ENCODE measurements at regions of chr1 and their contacts with region 1.

Region 1: GRCh38 chr1:113928941-113929749 is at the start of gene HIPK1:
- DNase-seq: peak; percentile 95
- H3K4me3 Mint-ChIP-seq: peak within 1 kb of the TSS; percentile 98
- H3K27ac Mint-ChIP-seq: peak within 1 kb of the TSS; percentile 99
- H3K4me1 Mint-ChIP-seq: peaks cover 46% of the 10 kb centered on the region
- H3K27me3 Mint-ChIP-seq: no peaks in the 10 kb centered on the region
- total RNA-seq, gene HIPK1: 55.3 to 55.7 TPM

Region 2: GRCh38 chr1:113742515-113742914 is 186.6 kb before region 1 on chr1:
- CTCF ChIA-PET with region 1: no interaction called
- POLR2A ChIA-PET with region 1: no interaction called
- intact Hi-C with region 1: no loop called
- DNase-seq: no peak
- H3K4me3 Mint-ChIP-seq: no peak overlapping the region
- H3K27ac Mint-ChIP-seq: peak overlapping the region; percentile 26
- H3K4me1 Mint-ChIP-seq: peaks cover 10% of the 10 kb centered on the region
- H3K27me3 Mint-ChIP-seq: no peaks in the 10 kb centered on the region

Region 3: DNA sequence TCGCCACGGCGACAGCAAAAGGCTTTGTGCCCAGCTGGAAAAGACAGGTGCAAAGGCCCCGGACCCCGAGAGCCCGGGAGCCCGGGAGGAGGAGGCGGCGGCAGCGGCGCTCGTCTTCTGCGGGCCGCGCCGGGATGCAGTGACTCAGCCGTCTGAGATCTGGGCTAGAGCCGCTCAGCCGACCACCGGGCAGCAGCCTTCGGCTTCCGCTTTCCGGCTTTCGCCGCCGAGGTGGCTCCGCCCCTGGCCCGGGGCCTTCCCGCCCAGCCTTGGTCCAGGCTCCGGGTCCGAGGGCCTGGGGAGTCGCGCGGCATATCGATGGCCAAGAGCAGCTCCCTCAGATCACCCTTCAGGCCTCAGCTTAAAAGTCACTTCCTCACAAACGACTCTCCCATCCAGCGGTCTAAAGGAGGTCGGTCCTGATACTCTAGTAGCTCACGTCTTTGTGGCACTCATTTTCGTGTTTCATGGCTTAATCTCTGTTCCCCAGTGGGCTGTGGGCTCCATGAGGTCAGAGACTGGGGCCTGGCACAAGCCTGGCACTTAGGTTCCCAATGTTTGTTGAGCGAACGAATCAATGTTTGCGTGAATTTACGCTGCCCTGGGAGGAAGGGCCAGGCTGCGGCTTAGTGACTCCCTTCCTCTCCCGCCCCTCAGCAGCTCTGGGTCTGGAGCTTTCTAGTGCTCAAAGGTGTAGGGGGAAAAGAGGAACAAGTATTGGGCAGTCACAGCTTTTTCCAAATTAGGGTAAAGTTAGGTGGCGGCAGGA is 169.6 kb before region 1 on chr1 and contains the start of gene PHTF1:
- CTCF ChIA-PET with region 1: interaction called, 4 read pairs
- POLR2A ChIA-PET with region 1: interaction called, 6 read pairs
- intact Hi-C with region 1: loop called (anchors 10 kb)
- DNase-seq: peak; percentile 76
- H3K4me3 Mint-ChIP-seq: peak within 1 kb of the TSS; percentile 87
- H3K27ac Mint-ChIP-seq: peak within 1 kb of the TSS; percentile 99
- H3K4me1 Mint-ChIP-seq: peaks cover 26% of the 10 kb centered on the region
- H3K27me3 Mint-ChIP-seq: no peaks in the 10 kb centered on the region
- total RNA-seq, gene PHTF1: 12.6 to 12.9 TPM

Region 4: GRCh38 chr1:113871597-113872113 is 57.5 kb before region 1 on chr1 and contains the start of gene PTPN22:
- CTCF ChIA-PET with region 1: interaction called, 10 read pairs
- POLR2A ChIA-PET with region 1: interaction called, 36 read pairs
- intact Hi-C with region 1: loop called (anchors 1 kb)
- DNase-seq: peak; percentile 89
- H3K4me3 Mint-ChIP-seq: peak within 1 kb of the TSS; percentile 80
- H3K27ac Mint-ChIP-seq: peak within 1 kb of the TSS; percentile 97
- H3K4me1 Mint-ChIP-seq: peaks cover 75% of the 10 kb centered on the region
- H3K27me3 Mint-ChIP-seq: no peaks in the 10 kb centered on the region
- total RNA-seq, gene PTPN22: 45.2 to 45.7 TPM

Region 5: DNA sequence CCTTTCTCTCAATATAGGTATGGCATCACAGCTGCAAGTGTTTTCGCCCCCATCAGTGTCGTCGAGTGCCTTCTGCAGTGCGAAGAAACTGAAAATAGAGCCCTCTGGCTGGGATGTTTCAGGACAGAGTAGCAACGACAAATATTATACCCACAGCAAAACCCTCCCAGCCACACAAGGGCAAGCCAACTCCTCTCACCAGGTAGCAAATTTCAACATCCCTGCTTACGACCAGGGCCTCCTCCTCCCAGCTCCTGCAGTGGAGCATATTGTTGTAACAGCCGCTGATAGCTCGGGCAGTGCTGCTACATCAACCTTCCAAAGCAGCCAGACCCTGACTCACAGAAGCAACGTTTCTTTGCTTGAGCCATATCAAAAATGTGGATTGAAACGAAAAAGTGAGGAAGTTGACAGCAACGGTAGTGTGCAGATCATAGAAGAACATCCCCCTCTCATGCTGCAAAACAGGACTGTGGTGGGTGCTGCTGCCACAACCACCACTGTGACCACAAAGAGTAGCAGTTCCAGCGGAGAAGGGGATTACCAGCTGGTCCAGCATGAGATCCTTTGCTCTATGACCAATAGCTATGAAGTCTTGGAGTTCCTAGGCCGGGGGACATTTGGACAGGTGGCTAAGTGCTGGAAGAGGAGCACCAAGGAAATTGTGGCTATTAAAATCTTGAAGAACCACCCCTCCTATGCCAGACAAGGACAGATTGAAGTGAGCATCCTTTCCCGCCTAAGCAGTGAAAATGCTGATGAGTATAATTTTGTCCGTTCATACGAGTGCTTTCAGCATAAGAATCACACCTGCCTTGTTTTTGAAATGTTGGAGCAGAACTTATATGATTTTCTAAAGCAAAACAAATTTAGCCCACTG is 11.5 kb after region 1 on chr1:
- CTCF ChIA-PET with region 1: interaction called, 42 read pairs
- POLR2A ChIA-PET with region 1: interaction called, 58 read pairs
- intact Hi-C with region 1: loop called (anchors 1 kb)
- DNase-seq: peak; percentile 77
- H3K4me3 Mint-ChIP-seq: peak overlapping the region; percentile 60
- H3K27ac Mint-ChIP-seq: peak overlapping the region; percentile 85
- H3K4me1 Mint-ChIP-seq: peaks cover 77% of the 10 kb centered on the region
- H3K27me3 Mint-ChIP-seq: no peaks in the 10 kb centered on the region

Region 6: DNA sequence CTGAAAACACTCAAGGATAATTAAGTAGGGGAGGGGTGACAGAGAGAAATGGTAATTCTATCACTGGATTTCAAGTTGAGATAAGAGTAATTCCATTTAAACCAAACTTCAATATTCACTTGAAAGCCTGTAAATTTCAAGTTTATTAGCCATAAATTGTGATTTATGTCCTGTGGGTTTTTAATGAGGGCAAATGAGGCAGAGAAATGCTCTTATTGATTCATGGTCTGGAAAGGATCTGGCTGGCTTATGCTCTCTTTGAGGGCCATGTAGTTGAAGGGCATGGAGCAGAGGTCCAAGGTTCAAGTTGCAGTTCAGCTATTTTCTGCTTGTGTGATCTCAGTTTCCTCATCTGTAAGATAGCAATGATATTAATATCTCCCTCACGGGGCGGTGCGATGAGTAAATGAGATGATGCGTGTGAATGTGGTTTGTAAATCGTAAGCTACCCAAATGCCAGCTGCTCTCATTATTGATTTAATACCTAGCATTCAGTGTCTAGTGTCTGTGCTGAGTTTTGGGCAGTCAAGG is 62.4 kb after region 1 on chr1:
- CTCF ChIA-PET with region 1: no interaction called
- POLR2A ChIA-PET with region 1: no interaction called
- intact Hi-C with region 1: no loop called
- DNase-seq: no peak
- H3K4me3 Mint-ChIP-seq: no peak overlapping the region
- H3K27ac Mint-ChIP-seq: no peak overlapping the region
- H3K4me1 Mint-ChIP-seq: no peaks in the 10 kb centered on the region
- H3K27me3 Mint-ChIP-seq: peaks cover 4% of the 10 kb centered on the region

Region 7: DNA sequence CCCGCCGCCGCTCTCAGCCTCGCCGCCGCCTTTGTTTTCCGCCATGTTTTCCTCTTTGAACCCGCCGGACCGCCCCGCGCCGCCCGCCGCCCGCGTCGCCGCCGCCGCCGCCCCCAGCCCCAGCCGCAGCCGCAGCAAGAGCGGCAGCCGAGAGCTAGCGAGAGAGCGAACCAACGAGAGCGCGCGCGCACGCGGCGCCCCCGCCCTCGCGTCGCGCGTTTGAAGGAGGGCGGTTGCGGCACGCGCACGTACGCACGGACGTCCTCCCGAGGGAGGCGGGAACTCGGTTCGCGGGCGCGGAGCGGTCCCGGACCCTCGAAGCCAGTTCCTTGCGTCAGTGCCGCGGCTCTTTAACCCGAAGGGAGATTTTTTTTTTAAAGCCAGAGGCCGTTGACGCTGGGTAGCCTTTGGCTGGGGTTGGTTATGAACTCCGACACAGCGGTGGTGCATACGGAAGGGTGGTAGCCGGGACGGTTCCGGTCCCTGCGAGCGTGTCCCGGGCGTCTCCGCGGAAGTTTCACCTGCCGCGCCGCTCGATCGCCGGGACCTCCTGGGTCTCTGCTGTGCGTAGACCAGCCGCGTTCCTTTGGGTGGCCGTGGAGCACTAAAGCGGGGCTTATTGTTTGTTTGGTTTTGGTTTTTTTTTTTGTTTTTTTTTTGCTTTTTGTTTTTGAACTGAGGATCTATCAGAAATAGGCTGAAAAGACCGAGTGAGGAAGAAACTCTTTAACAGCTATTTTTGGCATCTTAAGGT is 582.1 kb after region 1 on chr1 and contains the start of gene TRIM33:
- CTCF ChIA-PET with region 1: interaction called, 4 read pairs
- POLR2A ChIA-PET with region 1: interaction called, 3 read pairs
- intact Hi-C with region 1: loop called (anchors 2 kb)
- DNase-seq: peak; percentile 95
- H3K4me3 Mint-ChIP-seq: peak within 1 kb of the TSS; percentile 91
- H3K27ac Mint-ChIP-seq: peak within 1 kb of the TSS; percentile 98
- H3K4me1 Mint-ChIP-seq: peaks cover 41% of the 10 kb centered on the region
- H3K27me3 Mint-ChIP-seq: no peaks in the 10 kb centered on the region
- total RNA-seq, gene TRIM33: 26.9 to 27.9 TPM

Measured in activated CD4-positive, alpha-beta memory T cell treated with anti-CD3 and anti-CD28 coated beads for 36 hours (primary cell).